Common myeloid progenitor, CD34-positive (primary cell): ENCODE measurements at regions of chr5 and their contacts with region 1.

Region 1: DNA sequence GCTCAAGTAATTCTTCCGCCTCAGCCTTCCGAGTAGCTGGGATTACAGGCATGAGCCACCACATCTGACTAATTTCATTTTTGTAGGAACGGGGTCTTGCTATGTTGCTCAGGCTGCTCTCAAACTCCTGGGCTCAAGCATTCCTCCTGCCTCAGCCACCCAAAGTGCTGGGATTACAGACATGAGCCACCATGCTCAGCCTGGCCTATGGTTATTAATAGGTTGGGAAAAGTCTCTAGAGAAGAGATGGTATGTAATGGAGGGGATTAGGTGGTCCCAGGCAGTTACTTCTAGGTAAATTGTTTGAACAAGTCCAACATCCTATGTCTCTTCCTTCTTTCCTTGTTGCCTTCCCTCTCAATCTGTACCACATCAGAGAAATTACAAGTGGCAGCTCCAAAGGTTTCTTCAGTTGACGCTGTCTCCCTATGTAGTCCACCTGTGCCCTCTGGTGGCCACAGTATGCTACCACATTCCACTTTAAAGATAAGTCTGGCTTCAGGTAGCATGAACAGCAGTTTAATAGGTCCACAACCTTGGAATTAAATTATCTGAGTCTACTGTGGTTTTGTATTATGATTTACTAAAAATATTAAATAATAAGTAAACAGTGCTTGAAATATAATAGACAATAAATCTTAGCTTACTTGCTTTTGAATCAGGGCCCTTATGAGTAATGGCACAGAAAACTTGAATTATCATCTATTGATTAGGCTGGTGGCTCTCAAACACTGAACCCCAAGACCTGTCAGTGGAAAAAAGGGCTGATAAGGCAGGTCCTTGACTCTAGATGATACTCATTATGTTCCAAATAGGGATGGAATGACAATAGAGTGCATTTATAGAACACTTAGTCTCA is 9.7 kb downstream of the TIGD6 start:
- DNase-seq: peak; percentile 72 to 86 (median 81)
- H3K4me3 ChIP-seq: no peak overlapping the region
- H3K27ac ChIP-seq: no peak overlapping the region
- H3K4me1 ChIP-seq: no peaks in the 10 kb centered on the region
- H3K27me3 ChIP-seq: no peaks in the 10 kb centered on the region

Region 2: DNA sequence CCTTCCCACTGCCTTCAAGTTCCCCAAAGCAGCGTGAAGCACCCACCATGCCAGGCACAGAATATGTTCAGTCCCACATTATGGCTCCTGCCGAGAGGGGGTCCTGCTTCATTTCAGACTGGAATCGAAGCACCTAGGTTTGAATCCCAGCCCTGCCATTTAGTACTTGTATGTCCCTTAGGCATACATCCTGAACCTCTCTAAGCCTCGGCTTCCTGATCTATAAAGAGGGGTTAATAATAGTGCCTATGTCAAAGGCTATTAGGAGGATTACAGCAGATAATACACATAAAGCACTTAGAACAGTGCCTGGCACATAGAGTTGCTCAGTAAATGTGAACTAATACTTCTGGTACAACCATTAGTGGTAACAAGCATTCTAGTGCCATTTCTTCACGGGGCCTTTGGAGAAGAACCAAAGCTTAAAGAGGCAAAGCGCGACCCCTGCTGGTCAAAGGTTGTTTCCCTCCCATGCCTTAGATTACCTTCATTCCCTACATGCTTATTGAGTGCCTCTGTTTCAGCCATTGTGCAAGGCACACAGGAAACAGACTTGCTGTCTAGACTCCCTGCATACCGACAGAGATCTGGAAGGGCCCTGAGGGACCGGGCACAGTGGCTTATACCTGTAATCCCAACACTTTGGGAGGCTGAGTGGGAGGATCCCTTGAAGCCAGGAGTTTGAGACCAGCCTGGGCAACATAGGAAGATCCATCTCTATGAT is 162.4 kb before region 1 on chr5:
- CTCF ChIA-PET with region 1: interaction called, 262 read pairs
- POLR2A ChIA-PET with region 1: no interaction called
- DNase-seq: peak; percentile 85 to 92 (median 87)
- H3K4me3 ChIP-seq: no peak overlapping the region
- H3K27ac ChIP-seq: no peak overlapping the region
- H3K4me1 ChIP-seq: peaks cover 0 to 4% (median 0%) of the 10 kb centered on the region in 4 experiments
- H3K27me3 ChIP-seq: no peaks in the 10 kb centered on the region

Region 3: DNA sequence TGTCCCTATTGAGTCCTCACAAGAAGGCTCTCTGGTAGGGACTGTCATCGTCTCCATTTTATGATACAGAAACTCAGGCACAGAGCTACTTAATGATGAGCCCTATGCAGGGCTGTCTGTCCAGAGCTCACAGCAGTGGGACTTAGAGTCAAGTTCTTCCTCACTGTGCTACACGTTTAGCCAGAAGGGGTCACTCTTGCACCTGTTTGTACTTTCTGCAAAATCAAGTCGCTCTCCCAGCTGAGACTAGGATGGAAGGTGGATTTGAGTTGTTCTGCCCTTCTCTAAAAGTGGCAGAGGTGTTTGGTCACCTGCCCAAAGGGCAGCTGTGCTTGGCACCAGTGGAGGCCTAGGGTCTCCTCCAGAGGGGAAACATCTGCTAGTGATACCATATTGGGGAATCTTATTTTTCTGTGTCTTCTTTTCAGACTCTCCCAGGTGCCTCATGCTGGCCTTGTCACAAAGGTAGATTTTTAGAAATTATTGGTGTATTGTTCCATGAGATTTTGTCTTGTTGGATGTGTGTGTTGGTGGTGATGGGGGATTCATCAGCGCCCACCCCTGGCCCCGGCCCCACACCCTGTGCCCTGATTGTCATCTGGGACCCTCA is 156.4 kb before region 1 on chr5:
- CTCF ChIA-PET with region 1: interaction called, 262 read pairs
- POLR2A ChIA-PET with region 1: no interaction called
- DNase-seq: peak; percentile 88 to 95 (median 90)
- H3K4me3 ChIP-seq: no peak overlapping the region
- H3K27ac ChIP-seq: no peak overlapping the region
- H3K4me1 ChIP-seq: no peaks in the 10 kb centered on the region
- H3K27me3 ChIP-seq: no peaks in the 10 kb centered on the region

Region 4: GRCh38 chr5:149960272-149961185 is 30.2 kb before region 1 on chr5 and contains the start of gene SLC26A2:
- CTCF ChIA-PET with region 1: interaction called, 17 read pairs
- POLR2A ChIA-PET with region 1: no interaction called
- DNase-seq: peak; percentile 95 to 96 (median 96)
- H3K4me3 ChIP-seq: peak within 1 kb of the TSS; percentile 48 to 86 (median 78)
- H3K27ac ChIP-seq: peak within 1 kb of the TSS; percentile 33 to 83
- H3K4me1 ChIP-seq: peaks cover 0 to 23% (median 22%) of the 10 kb centered on the region in 4 experiments
- H3K27me3 ChIP-seq: no peaks in the 10 kb centered on the region

Region 5: GRCh38 chr5:149979896-149980295 is 10.9 kb before region 1 on chr5:
- CTCF ChIA-PET with region 1: interaction called, 14 read pairs
- POLR2A ChIA-PET with region 1: no interaction called
- DNase-seq: no peak
- H3K4me3 ChIP-seq: no peak overlapping the region
- H3K27ac ChIP-seq: no peak overlapping the region
- H3K4me1 ChIP-seq: peaks cover 0 to 2% (median 0%) of the 10 kb centered on the region in 4 experiments
- H3K27me3 ChIP-seq: no peaks in the 10 kb centered on the region

Region 6: DNA sequence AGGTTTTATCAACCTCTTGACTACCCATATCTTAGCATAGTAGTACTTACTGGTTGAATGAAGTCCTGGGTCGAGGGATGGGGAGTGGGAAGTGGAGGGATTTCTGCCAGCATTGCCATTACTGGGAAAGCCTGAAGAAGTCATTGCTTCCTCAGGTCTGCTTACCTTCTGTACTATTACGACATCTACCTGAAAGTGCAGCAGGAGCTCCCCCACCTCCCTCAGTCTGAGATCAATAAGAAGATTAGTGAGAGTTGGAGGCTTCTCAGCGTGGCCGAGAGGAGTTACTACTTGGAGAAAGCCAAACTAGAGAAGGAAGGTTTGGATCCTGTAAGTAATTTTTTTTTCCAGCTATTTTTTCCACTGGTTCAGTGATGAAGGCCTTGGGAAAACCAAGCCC is 15.6 kb after region 1 on chr5:
- CTCF ChIA-PET with region 1: interaction called, 18 read pairs
- POLR2A ChIA-PET with region 1: no interaction called
- DNase-seq: no peak
- H3K4me3 ChIP-seq: no peak overlapping the region
- H3K27ac ChIP-seq: no peak overlapping the region
- H3K4me1 ChIP-seq: peaks cover 11 to 16% (median 16%) of the 10 kb centered on the region in 4 experiments
- H3K27me3 ChIP-seq: no peaks in the 10 kb centered on the region